ENCODE measurements at regions of chr1 and their contacts with region 1.

Region 1: GRCh38 chr1:226223786-226224244 is 351 bp downstream of the MIXL1 start:
- DNase-seq: peak in 7 of 14 experiments; percentile 2 to 35 (median 9)
- ATAC-seq: peak; percentile 24
- H3K4me3 ChIP-seq: peak overlapping the region; percentile 38
- H3K4me3 Mint-ChIP-seq: peak overlapping the region; percentile 82
- H3K27ac ChIP-seq: no peak overlapping the region
- H3K27ac Mint-ChIP-seq: no peak overlapping the region
- H3K4me1 ChIP-seq: peaks cover 11% of the 10 kb centered on the region
- H3K4me1 Mint-ChIP-seq: no peaks in the 10 kb centered on the region
- H3K27me3 ChIP-seq: peaks cover 22 to 29% of the 10 kb centered on the region in 2 experiments
- H3K27me3 Mint-ChIP-seq: peaks cover 52% of the 10 kb centered on the region
- CTCF ChIP-seq: no peak

Region 2: DNA sequence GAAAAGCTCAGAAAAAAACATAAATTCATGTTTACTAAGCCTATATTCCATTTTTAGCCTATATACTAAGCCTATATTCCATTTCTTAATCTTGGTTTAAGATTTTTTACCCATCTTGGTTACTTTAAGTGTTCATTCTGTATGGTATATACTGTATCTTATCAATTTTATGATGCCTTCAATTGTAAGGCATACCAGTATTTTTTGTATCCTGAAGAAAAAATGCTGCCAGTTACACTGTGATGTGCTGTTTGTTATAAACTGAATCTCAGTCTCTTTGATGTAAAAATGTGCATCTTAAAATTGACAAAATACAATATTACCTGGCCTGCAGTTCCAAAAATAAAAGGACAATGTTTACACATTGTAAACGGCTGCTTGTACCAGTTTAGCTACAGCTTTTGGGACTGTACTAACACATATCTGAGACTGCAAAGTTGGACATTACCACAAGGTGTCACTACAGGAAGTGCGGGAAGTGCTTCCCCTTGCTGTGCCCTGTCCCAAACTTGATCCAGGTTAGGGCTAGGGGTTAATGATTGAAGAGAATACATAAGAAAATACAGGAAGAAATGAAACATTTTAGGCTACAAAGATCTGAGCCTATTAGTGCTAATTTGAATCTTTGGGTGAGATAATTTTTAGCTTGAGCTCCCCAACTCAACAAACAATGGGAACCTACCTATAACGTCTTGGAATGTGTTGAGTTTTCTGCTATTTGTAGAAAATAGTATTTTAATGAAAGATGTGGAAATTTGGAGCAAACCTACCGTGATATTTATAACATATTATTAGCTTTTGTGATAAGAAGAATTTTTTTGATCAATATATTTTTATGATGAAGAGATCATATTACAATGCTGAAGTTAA is 904.9 kb before region 1 on chr1:
- CTCF ChIA-PET with region 1: no interaction called
- POLR2A ChIA-PET with region 1: no interaction called
- intact Hi-C with region 1: loop called in 1 of 2 experiments (anchors 2 kb)
- DNase-seq: peak in 4 of 14 experiments; percentile 25 to 55 (median 46)
- ATAC-seq: peak; percentile 43
- H3K4me3 ChIP-seq: no peak overlapping the region
- H3K4me3 Mint-ChIP-seq: no peak overlapping the region
- H3K27ac ChIP-seq: no peak overlapping the region
- H3K27ac Mint-ChIP-seq: no peak overlapping the region
- H3K4me1 ChIP-seq: no peaks in the 10 kb centered on the region
- H3K4me1 Mint-ChIP-seq: no peaks in the 10 kb centered on the region
- H3K27me3 ChIP-seq: peaks cover 0 to 6% of the 10 kb centered on the region in 2 experiments
- H3K27me3 Mint-ChIP-seq: no peaks in the 10 kb centered on the region
- CTCF ChIP-seq: peak; percentile 84

Region 3: DNA sequence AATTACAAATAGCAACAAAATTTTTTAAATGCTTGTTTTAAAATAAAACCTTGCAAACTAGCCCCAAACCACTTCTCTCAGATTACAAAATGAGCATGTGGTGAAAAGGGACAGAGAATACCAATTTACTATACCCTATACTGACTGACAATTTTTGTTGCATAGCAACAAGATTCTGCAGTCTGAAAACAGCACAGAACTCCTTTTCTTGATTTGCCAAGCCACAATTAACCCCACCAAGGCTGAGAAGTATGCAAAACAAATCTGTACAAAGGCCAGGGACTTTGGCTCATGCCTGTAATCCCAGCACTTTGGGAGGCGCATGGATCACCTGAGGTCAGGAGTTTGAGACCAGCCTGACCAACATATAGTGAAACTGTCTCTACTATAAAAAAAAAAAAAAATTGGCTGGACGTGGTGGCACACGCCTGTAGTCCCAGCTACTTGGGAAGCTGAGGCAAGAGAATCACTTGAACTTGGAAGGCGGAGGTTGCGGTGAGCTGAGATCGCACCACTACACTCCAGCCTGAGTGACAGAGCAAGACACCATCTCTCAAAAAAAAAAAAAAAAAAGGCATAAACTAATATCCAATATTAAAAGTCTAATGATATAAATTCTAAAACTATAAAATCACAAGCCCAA is 592.7 kb before region 1 on chr1:
- CTCF ChIA-PET with region 1: no interaction called
- POLR2A ChIA-PET with region 1: no interaction called
- intact Hi-C with region 1: no loop called
- DNase-seq: no peak
- ATAC-seq: no peak
- H3K4me3 ChIP-seq: no peak overlapping the region
- H3K4me3 Mint-ChIP-seq: no peak overlapping the region
- H3K27ac ChIP-seq: no peak overlapping the region
- H3K27ac Mint-ChIP-seq: no peak overlapping the region
- H3K4me1 ChIP-seq: no peaks in the 10 kb centered on the region
- H3K4me1 Mint-ChIP-seq: no peaks in the 10 kb centered on the region
- H3K27me3 ChIP-seq: no peaks in the 10 kb centered on the region
- H3K27me3 Mint-ChIP-seq: peaks cover 21% of the 10 kb centered on the region
- CTCF ChIP-seq: no peak

Region 4: GRCh38 chr1:227072991-227073390 is 849.2 kb after region 1 on chr1:
- CTCF ChIA-PET with region 1: no interaction called
- POLR2A ChIA-PET with region 1: no interaction called
- intact Hi-C with region 1: no loop called
- DNase-seq: no peak
- ATAC-seq: no peak
- H3K4me3 ChIP-seq: no peak overlapping the region
- H3K4me3 Mint-ChIP-seq: no peak overlapping the region
- H3K27ac ChIP-seq: no peak overlapping the region
- H3K27ac Mint-ChIP-seq: no peak overlapping the region
- H3K4me1 ChIP-seq: no peaks in the 10 kb centered on the region
- H3K4me1 Mint-ChIP-seq: no peaks in the 10 kb centered on the region
- H3K27me3 ChIP-seq: no peaks in the 10 kb centered on the region
- H3K27me3 Mint-ChIP-seq: no peaks in the 10 kb centered on the region
- CTCF ChIP-seq: no peak

Measured in CD4-positive, alpha-beta T cell (primary cell).